ENCODE measurements at regions of chr18 and their contacts with region 1.

Region 1: DNA sequence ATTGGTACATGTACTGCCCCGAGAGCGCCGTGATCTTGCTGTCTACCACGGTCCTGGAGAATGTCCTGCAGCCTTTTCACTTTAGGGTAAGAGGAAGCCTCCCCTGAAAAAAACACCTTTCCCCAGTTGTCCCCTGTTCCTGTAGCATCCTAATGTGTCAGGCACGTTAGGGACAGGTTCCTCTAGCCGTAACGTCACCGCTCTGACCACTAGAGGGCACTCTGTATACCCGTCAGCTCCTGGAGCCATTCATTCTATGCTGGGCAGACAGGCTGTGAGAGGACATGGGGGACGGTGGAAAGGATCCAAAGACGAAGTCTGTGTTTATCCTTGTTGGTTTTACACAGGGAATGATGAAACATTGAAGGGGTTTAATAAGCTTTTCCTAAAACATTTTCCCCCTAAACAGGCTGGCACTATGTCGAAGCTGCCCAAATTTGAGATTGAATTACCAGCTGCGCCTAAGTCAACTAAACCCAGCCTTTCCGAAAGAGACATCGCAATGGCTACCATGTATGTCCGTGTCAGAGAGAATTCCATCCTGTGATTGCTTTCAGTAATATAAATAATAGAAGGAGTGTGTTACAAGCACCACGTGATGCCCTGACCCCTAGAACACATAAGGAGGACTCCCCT is 12.7 kb downstream of the RMC1 start:
- DNase-seq: peak; percentile 76
- ATAC-seq: peak; percentile 98
- H3K4me3 ChIP-seq: no peak overlapping the region
- H3K27ac ChIP-seq: no peak overlapping the region
- H3K4me1 ChIP-seq: no peaks in the 10 kb centered on the region; the same call in 1 of the 2 replicates
- H3K27me3 ChIP-seq: no peaks in the 10 kb centered on the region
- CTCF ChIP-seq: peak; percentile 81
- POLR2A ChIP-seq: no peak
- RAD21 ChIP-seq: peak; percentile 81

Region 2: DNA sequence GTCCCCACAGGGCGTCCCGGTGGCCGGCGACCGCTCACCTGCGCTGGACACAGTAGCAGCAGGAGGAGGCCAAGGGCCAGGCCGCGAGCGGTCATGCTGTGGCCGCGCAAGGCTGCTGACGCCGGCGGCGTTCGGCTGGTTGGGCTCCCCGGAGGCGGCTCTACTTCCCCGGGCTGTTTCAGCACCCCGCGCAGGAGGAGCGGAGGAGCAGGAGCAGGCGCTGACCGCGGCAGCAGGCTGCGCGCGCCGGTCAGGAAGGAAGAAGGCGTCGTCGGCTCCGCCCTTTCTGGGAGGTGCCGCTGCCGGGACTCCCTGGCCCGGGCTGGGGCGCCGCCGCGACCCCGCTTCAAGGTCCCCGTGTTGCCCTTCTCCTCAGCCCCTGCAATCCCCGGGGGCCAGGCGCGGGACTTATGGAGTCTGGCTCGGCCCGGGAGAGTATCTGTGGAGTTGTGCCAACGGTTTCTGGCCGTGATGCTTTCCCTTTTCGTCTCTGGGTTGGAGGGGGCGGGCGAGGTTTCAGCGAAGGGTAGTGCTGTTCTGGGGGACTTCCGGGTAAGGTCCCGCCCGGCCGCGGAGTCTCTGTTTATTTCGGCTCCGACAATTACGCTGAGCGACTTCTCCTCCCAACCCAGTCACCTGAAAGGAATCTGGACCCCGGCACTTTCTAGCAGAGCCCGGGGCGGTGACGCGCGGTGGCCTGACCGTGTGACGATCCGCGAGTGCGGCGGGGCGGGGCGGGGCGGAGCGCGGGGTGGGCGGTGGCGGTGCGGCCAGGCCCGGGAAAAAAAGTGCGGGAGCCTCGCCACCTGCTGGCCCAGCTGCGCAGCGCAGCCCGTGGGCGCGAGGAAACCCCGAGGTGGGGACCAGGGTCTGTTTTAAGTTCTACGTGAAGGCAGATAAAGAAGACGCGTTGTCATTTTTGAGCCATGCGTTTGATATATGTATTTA is 70.5 kb after region 1 on chr18 and contains the start of gene NPC1:
- CTCF ChIA-PET with region 1: interaction called, 4 read pairs
- POLR2A ChIA-PET with region 1: interaction called, 6 read pairs
- dilution Hi-C with region 1: no loop called
- in situ Hi-C with region 1: no loop called
- intact Hi-C with region 1: loop called (anchors 2 kb)
- DNase-seq: peak; percentile 92
- ATAC-seq: peak; percentile 97
- H3K4me3 ChIP-seq: peak within 1 kb of the TSS; percentile 75
- H3K27ac ChIP-seq: peak within 1 kb of the TSS; percentile 96
- H3K4me1 ChIP-seq: peaks cover 2% of the 10 kb centered on the region; the same call in 1 of the 2 replicates
- H3K27me3 ChIP-seq: no peaks in the 10 kb centered on the region
- CTCF ChIP-seq: peak; percentile 80
- POLR2A ChIP-seq: peak; percentile 86
- RAD21 ChIP-seq: peak; percentile 74
- total RNA-seq, gene NPC1: 4.7 and 7.9 TPM in 2 replicates

Region 3: GRCh38 chr18:23805898-23806297 is 289.9 kb after region 1 on chr18:
- CTCF ChIA-PET with region 1: no interaction called
- POLR2A ChIA-PET with region 1: no interaction called
- dilution Hi-C with region 1: no loop called
- in situ Hi-C with region 1: loop called (anchors 10 kb)
- intact Hi-C with region 1: no loop called
- DNase-seq: peak; percentile 64
- ATAC-seq: no peak
- H3K4me3 ChIP-seq: no peak overlapping the region
- H3K27ac ChIP-seq: no peak overlapping the region
- H3K4me1 ChIP-seq: no peaks in the 10 kb centered on the region
- H3K27me3 ChIP-seq: peaks cover 38% of the 10 kb centered on the region
- CTCF ChIP-seq: no peak
- POLR2A ChIP-seq: no peak
- RAD21 ChIP-seq: no peak

Region 4: GRCh38 chr18:23812546-23813440 is 296.8 kb after region 1 on chr18:
- CTCF ChIA-PET with region 1: no interaction called
- POLR2A ChIA-PET with region 1: no interaction called
- dilution Hi-C with region 1: no loop called
- in situ Hi-C with region 1: loop called (anchors 10 kb)
- intact Hi-C with region 1: loop called (anchors 1 kb)
- DNase-seq: peak; percentile 19
- ATAC-seq: peak; percentile 61; the same call in 1 of the 2 replicates
- H3K4me3 ChIP-seq: no peak overlapping the region
- H3K27ac ChIP-seq: no peak overlapping the region
- H3K4me1 ChIP-seq: no peaks in the 10 kb centered on the region
- H3K27me3 ChIP-seq: peaks cover 30% of the 10 kb centered on the region
- CTCF ChIP-seq: peak; percentile 66
- POLR2A ChIP-seq: no peak
- RAD21 ChIP-seq: peak; percentile 67